ENCODE measurements at regions of chr7 and their contacts with region 1.

Region 1: DNA sequence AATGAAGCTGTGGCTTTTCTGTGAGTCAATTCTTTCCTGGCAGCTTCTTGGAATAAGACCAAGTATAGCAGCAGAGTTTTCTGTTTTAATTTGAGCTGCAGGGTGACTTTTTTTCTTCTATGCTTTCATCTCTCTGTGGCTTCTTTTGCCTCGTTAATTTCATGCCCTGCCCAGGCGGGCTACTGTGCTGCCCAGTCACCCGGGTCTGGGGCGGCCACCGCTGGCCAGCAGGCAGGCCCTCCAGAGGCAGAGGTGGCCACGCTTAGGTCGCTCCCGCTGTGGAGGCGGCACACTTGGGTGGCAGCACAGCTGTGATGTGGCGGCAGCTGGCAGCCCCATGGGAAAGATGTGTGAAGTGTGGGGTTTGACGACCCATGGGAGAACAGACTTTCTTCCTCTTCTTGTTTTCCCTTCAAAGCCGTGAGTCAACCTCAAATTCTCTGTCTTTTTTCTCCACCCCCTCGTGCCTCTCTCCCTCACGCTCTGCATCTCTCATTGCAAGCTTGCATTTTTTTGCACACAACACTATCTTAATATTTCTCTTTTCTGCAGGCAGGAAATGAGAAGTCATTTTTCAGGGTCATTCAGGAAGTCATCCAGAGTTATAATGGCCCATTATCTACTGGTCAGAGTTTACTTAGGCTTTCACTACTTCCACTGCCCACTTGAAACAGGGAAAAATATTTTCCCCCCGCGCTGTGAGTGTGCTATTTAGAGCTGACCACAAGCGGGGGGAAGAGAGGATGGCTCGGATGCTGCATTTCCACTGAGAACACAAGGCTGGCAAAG is 67.8 kb downstream of the EGFR start:
- DNase-seq: peak; percentile 98

Region 2: GRCh38 chr7:54839538-54840213 is 246.9 kb before region 1 on chr7:
- in situ Hi-C with region 1: loop called (anchors 25 kb)
- DNase-seq: peak; percentile 83

Region 3: GRCh38 chr7:55493408-55493807 is 406.8 kb after region 1 on chr7:
- in situ Hi-C with region 1: no loop called
- DNase-seq: peak; percentile 56